PC-3 (cell line): ENCODE measurements at regions of chr19 and their contacts with region 1.

Region 1: DNA sequence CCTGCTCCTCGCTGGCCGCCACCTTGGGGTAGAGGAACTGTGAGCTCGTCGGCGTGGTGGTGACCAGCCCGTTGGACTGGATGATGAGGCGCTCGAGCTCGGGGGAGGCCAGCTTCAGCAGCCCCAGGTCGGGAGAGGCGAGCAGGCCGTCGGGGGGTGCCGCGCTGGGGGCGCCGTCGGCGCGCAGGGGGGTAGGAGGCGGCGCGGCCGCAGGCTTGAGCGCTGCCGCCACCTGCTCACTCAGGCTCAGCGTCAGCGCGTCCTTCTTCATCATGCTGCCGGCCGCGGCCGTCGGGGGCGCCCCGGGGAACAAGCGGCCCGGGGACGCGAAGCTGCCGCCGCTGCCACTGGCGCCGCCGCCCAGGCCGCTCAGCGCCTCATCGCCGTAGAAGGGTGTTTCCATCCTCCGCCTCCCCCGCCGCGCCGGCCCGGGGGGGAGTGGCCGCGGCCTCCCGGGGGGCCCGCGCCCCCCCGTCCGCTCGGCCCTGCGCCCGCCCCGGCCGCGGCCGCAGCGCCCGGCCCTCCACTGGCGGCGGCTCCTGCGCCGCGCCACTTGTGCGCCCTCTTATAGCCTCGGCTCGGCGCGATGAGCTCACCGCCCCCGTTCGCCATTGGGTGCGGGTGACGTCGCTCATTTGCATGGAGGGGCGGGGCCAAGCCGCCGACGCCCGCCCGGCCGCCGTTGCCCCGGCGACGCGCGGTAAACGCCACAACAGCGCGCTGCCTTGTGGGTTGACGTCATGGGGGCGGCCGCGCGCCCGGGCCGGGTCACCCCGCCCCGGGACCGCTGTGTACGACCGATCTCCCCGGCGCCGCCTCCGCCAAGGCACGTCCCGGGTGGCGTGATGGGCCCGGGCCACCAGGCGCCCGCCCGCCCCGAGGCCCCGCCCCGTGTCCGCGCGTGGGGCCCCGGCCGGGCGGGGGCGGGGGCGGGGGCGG is at the start of gene JUND:
- DNase-seq: peak; percentile 98
- ATAC-seq: peak; percentile 82
- H3K4me3 ChIP-seq: peak within 1 kb of the TSS; percentile 89
- H3K27ac ChIP-seq: peak within 1 kb of the TSS; percentile 99
- H3K4me1 ChIP-seq: peaks cover 18% of the 10 kb centered on the region
- H3K27me3 ChIP-seq: no peaks in the 10 kb centered on the region
- CTCF ChIP-seq: no peak
- total RNA-seq, gene JUND: 151 and 157 TPM in 2 replicates

Region 2: DNA sequence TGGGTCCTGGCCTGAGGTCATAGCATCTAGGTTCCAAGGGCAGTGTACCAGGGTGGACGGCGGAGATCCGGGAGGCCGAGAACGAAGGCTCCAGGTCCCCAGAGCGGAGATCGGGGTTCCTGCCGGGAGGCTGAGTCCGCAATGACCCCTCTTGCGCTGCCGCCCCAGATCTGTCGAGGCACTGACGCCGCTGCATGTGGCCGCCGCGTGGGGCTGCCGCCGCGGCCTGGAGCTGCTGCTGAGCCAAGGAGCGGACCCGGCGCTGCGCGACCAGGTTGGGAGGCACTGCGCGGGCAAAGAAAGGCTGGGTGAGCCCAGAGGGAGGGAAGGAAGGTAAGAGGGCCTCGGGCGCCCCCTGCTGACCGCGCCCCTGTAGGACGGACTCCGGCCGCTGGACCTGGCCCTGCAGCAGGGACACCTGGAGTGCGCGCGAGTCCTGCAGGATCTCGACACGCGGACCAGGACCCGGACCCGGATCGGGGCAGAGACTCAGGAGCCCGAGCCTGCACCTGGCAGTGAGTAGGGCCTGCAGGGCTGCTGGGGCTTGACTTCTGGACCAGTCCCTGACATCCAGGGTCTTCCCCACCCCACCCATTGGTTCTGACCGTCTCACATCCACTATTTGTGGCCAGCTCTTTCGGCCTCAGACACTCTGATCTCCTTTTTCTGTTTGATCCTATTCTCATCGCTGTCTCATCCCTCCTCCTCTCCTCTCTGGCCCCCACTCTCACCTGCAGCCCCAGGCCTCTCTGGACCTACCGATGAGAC is 998.7 kb before region 1 on chr19:
- CTCF ChIA-PET with region 1: no interaction called
- POLR2A ChIA-PET with region 1: interaction called, 15 read pairs
- intact Hi-C with region 1: no loop called
- DNase-seq: peak; percentile 87
- ATAC-seq: peak; percentile 94
- H3K4me3 ChIP-seq: peak overlapping the region; percentile 57
- H3K27ac ChIP-seq: no peak overlapping the region
- H3K4me1 ChIP-seq: no peaks in the 10 kb centered on the region
- H3K27me3 ChIP-seq: no peaks in the 10 kb centered on the region
- CTCF ChIP-seq: peak; percentile 87

Region 3: GRCh38 chr19:18203863-18204393 is 77.4 kb before region 1 on chr19 and contains the start of gene RAB3A:
- CTCF ChIA-PET with region 1: interaction called, 6 read pairs
- POLR2A ChIA-PET with region 1: interaction called, 10 read pairs
- intact Hi-C with region 1: no loop called
- DNase-seq: peak; percentile 100
- ATAC-seq: peak; percentile 92
- H3K4me3 ChIP-seq: peak within 1 kb of the TSS; percentile 90
- H3K27ac ChIP-seq: peak within 1 kb of the TSS; percentile 10
- H3K4me1 ChIP-seq: peaks cover 16% of the 10 kb centered on the region
- H3K27me3 ChIP-seq: no peaks in the 10 kb centered on the region
- CTCF ChIP-seq: no peak
- total RNA-seq, gene RAB3A: 5.7 and 6.7 TPM in 2 replicates

Region 4: GRCh38 chr19:18291590-18292461 is 10.5 kb after region 1 on chr19:
- CTCF ChIA-PET with region 1: interaction called, 4 read pairs
- POLR2A ChIA-PET with region 1: interaction called, 13 read pairs
- intact Hi-C with region 1: no loop called
- DNase-seq: peak; percentile 35
- ATAC-seq: peak; percentile 70
- H3K4me3 ChIP-seq: peak overlapping the region; percentile 70
- H3K27ac ChIP-seq: peak overlapping the region; percentile 23; the same call in 1 of the 2 replicates
- H3K4me1 ChIP-seq: peaks cover 17% of the 10 kb centered on the region
- H3K27me3 ChIP-seq: no peaks in the 10 kb centered on the region
- CTCF ChIP-seq: no peak

Region 5: GRCh38 chr19:18322759-18323460 is 41.6 kb after region 1 on chr19 and contains the start of gene LSM4:
- CTCF ChIA-PET with region 1: interaction called, 64 read pairs
- POLR2A ChIA-PET with region 1: interaction called, 47 read pairs
- intact Hi-C with region 1: loop called (anchors 1 kb)
- DNase-seq: peak; percentile 99
- ATAC-seq: peak; percentile 97
- H3K4me3 ChIP-seq: peak within 1 kb of the TSS; percentile 97
- H3K27ac ChIP-seq: peak within 1 kb of the TSS; percentile 73
- H3K4me1 ChIP-seq: peaks cover 25% of the 10 kb centered on the region
- H3K27me3 ChIP-seq: no peaks in the 10 kb centered on the region
- CTCF ChIP-seq: no peak
- total RNA-seq, gene LSM4: 713 and 856 TPM in 2 replicates

Region 6: GRCh38 chr19:18419195-18419698 is 137.9 kb after region 1 on chr19 and contains the start of gene SSBP4:
- CTCF ChIA-PET with region 1: interaction called, 3 read pairs
- POLR2A ChIA-PET with region 1: interaction called, 3 read pairs
- intact Hi-C with region 1: loop called (anchors 10 kb)
- DNase-seq: peak; percentile 85
- ATAC-seq: peak; percentile 22
- H3K4me3 ChIP-seq: peak within 1 kb of the TSS; percentile 91
- H3K27ac ChIP-seq: no peak within 1 kb of the TSS
- H3K4me1 ChIP-seq: peaks cover 37% of the 10 kb centered on the region
- H3K27me3 ChIP-seq: no peaks in the 10 kb centered on the region
- CTCF ChIP-seq: no peak
- total RNA-seq, gene SSBP4: 97.5 and 99.9 TPM in 2 replicates